ENCODE measurements at regions of chr17 and their contacts with region 1.

Region 1: GRCh38 chr17:8057691-8058114 is 18.8 kb downstream of the ALOX15B start:
- DNase-seq: peak; percentile 86
- H3K4me3 Mint-ChIP-seq: no peak overlapping the region
- H3K27ac Mint-ChIP-seq: no peak overlapping the region
- H3K4me1 Mint-ChIP-seq: peaks cover 34% of the 10 kb centered on the region
- H3K27me3 Mint-ChIP-seq: peaks cover 12% of the 10 kb centered on the region
- CTCF ChIP-seq: peak; percentile 86

Region 2: DNA sequence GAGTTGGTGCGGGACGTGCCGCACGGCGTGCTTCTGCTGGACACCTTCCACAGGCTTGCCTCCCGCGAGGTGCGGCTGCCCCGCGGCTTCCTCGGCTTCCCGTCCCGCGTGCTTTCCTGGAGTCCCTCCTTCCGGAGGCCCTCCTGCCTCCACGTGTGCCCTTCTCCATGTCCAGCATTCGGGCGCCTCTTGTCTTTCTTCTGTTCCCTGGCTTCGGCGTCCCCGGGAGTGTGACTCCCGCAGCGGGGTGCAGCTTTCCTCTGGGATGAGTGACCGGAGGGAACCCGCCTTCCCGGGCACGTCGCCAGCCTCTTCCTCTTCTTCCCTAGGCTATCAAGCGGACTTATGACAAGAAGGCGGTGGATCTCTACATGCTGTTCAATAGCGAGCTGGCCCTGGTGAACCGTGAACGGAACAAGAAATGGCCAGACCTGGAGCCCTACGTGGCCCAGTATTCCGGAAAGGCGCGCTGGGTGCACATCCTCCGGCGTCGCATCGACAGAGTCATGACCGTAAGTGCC is 317.2 kb before region 1 on chr17:
- CTCF ChIA-PET with region 1: interaction called, 5 read pairs
- POLR2A ChIA-PET with region 1: no interaction called
- intact Hi-C with region 1: loop called (anchors 2 kb)
- DNase-seq: no peak
- H3K4me3 Mint-ChIP-seq: peak overlapping the region; percentile 67
- H3K27ac Mint-ChIP-seq: peak overlapping the region; percentile 43
- H3K4me1 Mint-ChIP-seq: peaks cover 6% of the 10 kb centered on the region
- H3K27me3 Mint-ChIP-seq: peaks cover 56% of the 10 kb centered on the region
- CTCF ChIP-seq: no peak

Region 3: DNA sequence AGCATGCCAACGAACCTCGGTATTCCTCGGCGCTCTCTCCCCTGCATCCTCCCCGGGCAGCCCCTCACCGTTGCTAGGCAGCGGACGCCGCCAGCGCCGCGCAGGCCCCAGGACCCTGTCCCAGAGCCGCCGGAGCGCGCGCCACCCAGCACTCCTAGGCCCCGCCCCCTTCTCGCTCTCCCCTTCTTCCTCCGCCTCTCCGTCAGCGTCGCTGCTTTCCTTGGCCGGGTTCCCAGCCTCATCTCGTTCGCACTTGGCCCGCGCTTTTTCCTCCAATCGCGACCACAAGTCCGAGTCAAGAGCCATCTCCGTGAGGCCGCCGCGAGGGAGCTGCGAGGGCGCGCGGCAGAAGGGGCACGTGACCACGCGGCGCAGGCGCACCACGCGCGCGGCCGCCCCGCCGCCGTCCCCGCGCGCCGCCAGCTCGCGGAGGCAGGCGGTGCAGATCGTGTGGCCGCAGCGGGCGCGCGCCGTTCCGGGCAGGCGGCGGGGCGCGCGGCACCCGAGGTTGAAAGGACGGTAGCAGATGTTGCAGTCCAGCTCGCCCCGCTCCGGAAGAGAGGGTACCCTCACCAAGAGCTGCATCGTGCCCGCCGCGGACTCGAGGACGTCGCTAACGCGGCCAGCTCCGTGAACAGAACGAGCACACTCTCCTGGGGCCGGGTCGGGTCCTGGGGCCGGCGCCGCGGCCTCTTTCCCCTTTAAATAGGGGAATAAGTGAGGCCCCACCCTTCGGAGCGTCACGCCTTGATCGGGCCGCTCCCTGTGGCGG is 141.9 kb before region 1 on chr17 and contains the start of gene RNF227:
- CTCF ChIA-PET with region 1: interaction called, 24 read pairs
- POLR2A ChIA-PET with region 1: interaction called, 11 read pairs
- intact Hi-C with region 1: loop called (anchors 1 kb)
- DNase-seq: peak; percentile 97
- H3K4me3 Mint-ChIP-seq: peak within 1 kb of the TSS; percentile 93
- H3K27ac Mint-ChIP-seq: peak within 1 kb of the TSS; percentile 95
- H3K4me1 Mint-ChIP-seq: peaks cover 26% of the 10 kb centered on the region
- H3K27me3 Mint-ChIP-seq: no peaks in the 10 kb centered on the region
- CTCF ChIP-seq: no peak
- total RNA-seq, gene RNF227: 5.6 and 7.4 TPM in 2 replicates

Region 4: GRCh38 chr17:8022360-8023003 is 35.2 kb before region 1 on chr17:
- CTCF ChIA-PET with region 1: interaction called, 86 read pairs
- POLR2A ChIA-PET with region 1: interaction called, 19 read pairs
- intact Hi-C with region 1: no loop called
- DNase-seq: no peak
- H3K4me3 Mint-ChIP-seq: no peak overlapping the region
- H3K27ac Mint-ChIP-seq: peak overlapping the region; percentile 44
- H3K4me1 Mint-ChIP-seq: peaks cover 48% of the 10 kb centered on the region
- H3K27me3 Mint-ChIP-seq: no peaks in the 10 kb centered on the region
- CTCF ChIP-seq: no peak

Region 5: DNA sequence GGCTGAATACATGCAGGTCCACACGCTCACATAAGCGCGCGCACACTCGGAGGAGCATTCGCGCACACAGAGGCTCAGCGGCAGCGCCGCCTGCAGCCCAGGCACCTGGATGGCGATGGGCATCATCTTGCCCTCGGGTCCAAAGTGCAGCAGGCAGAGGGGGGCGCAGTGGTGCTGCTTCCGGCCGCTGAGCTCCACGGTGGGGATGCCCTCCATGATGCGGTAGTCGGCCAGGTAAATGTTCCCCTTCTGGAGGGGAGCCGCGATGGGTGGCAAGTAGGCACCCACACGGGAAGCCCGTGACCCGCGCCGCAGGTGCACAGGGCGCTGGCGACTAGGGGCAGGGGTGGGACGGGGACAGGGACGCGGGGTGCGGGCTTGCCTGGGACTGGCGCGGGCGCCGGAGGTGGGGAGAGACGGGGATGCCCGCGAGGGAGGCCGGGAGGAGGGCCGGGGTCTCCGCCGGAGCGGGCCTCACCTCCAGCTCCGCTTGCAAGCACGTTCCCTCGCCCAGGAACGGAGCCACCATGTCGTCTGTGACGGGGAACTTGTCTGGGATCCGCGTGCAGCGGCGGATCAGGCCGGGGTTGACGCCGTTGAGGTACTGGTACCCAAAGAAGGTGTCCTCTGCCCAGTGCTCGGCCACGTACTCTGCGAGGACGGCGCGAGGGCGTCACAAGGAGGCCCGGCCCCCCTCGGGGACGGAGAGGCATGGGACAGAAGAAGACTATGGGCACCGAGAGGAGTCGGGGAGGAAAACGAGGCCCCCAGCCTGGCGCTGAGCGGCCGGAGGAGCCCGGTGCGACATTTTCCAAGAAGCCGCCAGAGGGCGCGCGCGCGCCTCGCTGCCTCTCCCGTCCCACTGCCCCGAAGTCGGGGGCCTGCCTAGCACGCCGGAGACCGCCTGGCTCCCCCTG is 21.8 kb after region 1 on chr17:
- CTCF ChIA-PET with region 1: interaction called, 106 read pairs
- POLR2A ChIA-PET with region 1: interaction called, 8 read pairs
- intact Hi-C with region 1: no loop called
- DNase-seq: peak; percentile 60
- H3K4me3 Mint-ChIP-seq: peak overlapping the region; percentile 61
- H3K27ac Mint-ChIP-seq: no peak overlapping the region
- H3K4me1 Mint-ChIP-seq: peaks cover 6% of the 10 kb centered on the region
- H3K27me3 Mint-ChIP-seq: peaks cover 11% of the 10 kb centered on the region
- CTCF ChIP-seq: peak; percentile 87

Region 6: DNA sequence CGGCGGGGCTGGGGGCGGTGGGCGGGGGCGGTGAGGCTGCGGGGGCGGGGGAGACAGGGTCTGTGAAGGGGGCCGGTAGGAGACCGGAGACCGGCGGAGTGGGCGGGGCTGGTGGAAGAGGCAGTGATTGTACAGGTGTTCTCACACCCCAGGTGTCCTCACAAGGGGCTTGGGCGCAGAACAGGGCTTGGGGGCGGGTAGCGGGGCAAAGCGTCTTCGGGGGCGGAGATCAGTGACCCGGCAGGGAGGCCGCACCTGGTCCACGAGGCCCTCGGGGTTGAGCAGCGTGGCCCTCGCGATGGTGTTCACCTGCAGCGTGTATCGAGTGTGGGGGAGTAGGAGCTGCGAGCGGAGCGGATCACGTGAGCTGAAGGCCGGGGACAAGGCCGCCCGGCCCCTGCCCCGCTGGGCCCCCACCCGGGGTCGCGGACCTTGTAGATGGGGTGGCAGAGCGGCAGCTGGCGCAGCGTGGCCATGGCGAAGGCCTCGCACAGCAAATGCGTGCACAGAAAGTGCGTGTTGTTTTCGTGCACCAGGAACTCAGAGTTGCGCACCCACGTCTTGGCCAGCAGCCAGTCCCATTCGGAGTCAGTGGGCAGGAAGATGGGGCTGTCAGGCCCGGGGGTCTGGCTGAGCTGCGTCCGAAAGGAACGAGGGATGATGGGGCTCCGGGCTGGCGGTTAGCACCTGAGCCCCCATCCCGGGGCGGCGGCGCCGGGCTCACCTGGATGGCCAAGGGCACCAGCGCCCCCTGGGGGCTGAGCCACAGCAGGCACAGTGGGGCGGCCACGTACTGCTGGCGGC is 52.2 kb after region 1 on chr17:
- CTCF ChIA-PET with region 1: interaction called, 62 read pairs
- POLR2A ChIA-PET with region 1: interaction called, 7 read pairs
- intact Hi-C with region 1: no loop called
- DNase-seq: peak; percentile 72
- H3K4me3 Mint-ChIP-seq: no peak overlapping the region
- H3K27ac Mint-ChIP-seq: no peak overlapping the region
- H3K4me1 Mint-ChIP-seq: peaks cover 22% of the 10 kb centered on the region
- H3K27me3 Mint-ChIP-seq: no peaks in the 10 kb centered on the region
- CTCF ChIP-seq: peak; percentile 86

Region 7: DNA sequence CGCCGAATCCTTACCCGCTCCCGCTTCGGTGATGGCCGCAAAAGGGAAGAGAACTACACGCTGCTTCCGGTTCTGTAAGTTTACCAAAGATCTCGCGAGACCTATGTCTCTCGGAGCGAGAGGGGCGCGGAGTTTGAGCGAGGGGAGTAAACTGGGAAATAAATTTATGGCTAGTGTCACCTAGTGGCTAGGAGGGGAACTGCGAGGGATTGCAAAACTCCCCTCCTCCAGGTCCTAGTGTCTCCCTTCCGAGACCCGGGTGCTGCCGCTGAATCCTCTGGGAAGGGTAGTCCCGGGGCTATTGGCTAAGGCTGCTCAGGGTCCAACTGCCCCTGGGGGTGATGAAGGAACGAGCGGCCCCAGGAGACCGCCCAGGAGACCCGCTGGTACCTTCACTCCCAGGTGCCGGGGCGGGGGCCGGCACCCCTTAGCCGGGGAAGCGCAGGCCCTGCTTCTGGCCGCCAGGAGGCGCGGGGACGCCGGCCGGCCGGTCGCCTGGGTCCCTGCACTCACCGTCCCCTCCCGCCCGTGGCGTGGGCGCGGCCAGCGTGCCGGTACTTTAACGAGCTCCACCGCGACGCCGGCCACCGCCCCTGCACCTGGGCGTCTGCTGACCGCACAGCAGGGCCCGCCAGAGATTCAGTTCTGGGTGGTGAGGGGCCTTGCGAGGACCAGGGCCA is 325.6 kb after region 1 on chr17 and contains the start of gene RPL26:
- CTCF ChIA-PET with region 1: interaction called, 5 read pairs
- POLR2A ChIA-PET with region 1: no interaction called
- intact Hi-C with region 1: loop called (anchors 5 kb)
- DNase-seq: peak; percentile 99
- H3K4me3 Mint-ChIP-seq: peak within 1 kb of the TSS; percentile 97
- H3K27ac Mint-ChIP-seq: peak within 1 kb of the TSS; percentile 100
- H3K4me1 Mint-ChIP-seq: peaks cover 21% of the 10 kb centered on the region
- H3K27me3 Mint-ChIP-seq: no peaks in the 10 kb centered on the region
- CTCF ChIP-seq: peak; percentile 81
- total RNA-seq, gene RPL26: 3,179 and 3,524 TPM in 2 replicates

Measured in MCF 10A (cell line).